Vagina (tissue), 2 donors: ENCODE measurements at regions of chr5 and their contacts with region 1.

Region 1: GRCh38 chr5:171418316-171418981 is 998 bp upstream of the FGF18 start:
- DNase-seq: no peak
- H3K4me3 ChIP-seq: peak overlapping the region; percentile 33 to 45
- H3K27ac ChIP-seq: no peak overlapping the region
- H3K4me1 ChIP-seq: peaks cover 26% of the 10 kb centered on the region
- H3K27me3 ChIP-seq: peaks cover 4% of the 10 kb centered on the region
- CTCF ChIP-seq: peak; percentile 56 to 95 (median 89)
- POLR2A ChIP-seq: no peak

Region 2: GRCh38 chr5:171481576-171482433 is 63.4 kb after region 1 on chr5:
- intact Hi-C with region 1: no loop called
- DNase-seq: no peak
- H3K4me3 ChIP-seq: no peak overlapping the region
- H3K27ac ChIP-seq: no peak overlapping the region
- H3K4me1 ChIP-seq: peaks cover 6% of the 10 kb centered on the region
- H3K27me3 ChIP-seq: no peaks in the 10 kb centered on the region
- CTCF ChIP-seq: no peak
- POLR2A ChIP-seq: no peak

Region 3: GRCh38 chr5:171571663-171572062 is 153.2 kb after region 1 on chr5:
- intact Hi-C with region 1: no loop called
- DNase-seq: no peak
- H3K4me3 ChIP-seq: no peak overlapping the region
- H3K27ac ChIP-seq: no peak overlapping the region
- H3K4me1 ChIP-seq: no peaks in the 10 kb centered on the region
- H3K27me3 ChIP-seq: no peaks in the 10 kb centered on the region
- CTCF ChIP-seq: no peak
- POLR2A ChIP-seq: no peak

Region 4: DNA sequence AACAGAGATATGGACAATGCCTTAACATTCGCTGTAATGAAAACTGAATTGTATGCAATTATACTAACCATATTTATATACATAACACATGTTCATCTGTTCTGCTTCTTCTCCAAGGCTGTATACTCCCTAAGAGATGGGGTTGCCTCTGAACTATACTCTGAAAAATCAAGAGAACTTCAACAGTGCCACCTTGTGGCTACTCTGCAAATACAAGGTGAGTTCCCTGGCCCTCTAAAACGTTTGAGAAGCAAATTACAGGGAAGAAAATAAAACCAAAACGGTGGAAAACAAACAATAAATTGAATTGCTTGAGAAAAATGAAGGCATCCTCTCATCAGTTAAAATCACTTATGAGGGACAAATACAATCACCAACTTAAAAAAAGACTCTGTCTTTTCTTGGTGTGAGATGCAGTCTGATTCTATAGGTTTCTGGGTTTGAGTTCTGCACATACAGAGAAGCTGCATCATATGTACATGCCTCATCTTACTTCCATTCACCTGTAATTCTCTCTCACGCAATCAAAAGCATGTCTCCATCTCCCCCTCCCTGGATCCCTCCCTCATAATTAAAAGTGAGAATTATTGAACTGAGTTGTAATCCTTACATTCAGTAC is 489.4 kb after region 1 on chr5:
- intact Hi-C with region 1: loop called (anchors 5 kb)
- DNase-seq: no peak
- H3K4me3 ChIP-seq: no peak overlapping the region
- H3K27ac ChIP-seq: no peak overlapping the region
- H3K4me1 ChIP-seq: peaks cover 1% of the 10 kb centered on the region
- H3K27me3 ChIP-seq: no peaks in the 10 kb centered on the region
- CTCF ChIP-seq: peak; percentile 58 to 75 (median 73)
- POLR2A ChIP-seq: no peak